ENCODE measurements at regions of chr1 and their contacts with region 1.

Region 1: DNA sequence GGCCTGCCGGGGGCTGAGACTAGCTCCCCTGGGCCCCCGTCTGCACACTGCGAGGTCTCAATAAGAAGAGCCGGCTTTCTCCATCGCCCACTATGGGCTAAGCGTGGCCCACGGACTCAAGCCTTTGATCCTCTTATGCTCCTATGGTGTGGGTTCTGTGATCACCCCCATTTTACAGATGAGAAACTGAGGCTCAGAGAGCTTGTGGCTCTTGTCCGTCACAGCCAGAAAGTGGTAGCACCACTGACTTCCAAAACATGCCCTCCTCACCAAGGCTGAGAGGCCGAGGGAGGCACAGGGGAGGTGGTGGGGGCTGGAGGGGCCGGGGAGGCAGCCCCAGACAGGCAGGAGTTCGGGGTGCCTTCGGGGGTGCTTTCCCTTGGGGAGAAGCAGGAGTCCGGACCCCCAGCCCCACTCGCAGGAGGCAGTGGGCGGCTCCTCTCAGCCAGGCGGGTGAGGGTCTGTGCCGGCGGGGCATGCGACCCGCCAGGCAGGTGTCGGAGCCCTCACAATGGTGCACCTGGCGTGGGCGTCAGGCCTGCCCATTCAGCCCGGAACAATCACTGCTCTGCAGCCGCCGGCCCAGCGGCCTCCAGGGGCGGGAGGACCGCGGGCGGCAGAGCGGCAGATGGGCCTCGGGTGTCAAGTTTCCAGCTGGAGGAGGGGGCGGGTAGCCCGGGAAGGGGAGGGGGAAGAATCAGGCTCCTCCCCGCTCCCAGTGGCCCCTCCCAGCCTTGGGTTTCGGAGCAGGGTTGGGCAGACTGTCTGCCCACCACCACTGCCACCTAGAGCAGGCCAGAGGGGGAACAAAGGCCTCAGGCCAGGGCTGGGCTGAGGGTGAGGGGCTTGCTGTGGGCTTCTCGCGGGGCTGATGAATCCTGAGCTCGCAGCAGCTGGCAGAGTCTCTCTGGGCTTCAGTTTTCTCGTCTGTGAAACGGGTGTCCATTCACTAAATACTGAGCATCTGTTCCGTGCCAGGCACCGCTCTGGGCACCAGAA is 39.3 kb upstream of the CASZ1 start:
- DNase-seq: peak; percentile 87 to 97
- H3K4me3 ChIP-seq: peak overlapping the region in 2 of 4 experiments; percentile 12 to 50; a peak in 4 of 8 replicates
- H3K27ac ChIP-seq: no peak overlapping the region
- H3K4me1 ChIP-seq: peaks cover 0 to 34% (median 21%) of the 10 kb centered on the region in 4 experiments; a peak in 6 of 7 replicates
- H3K27me3 ChIP-seq: peaks cover 0 to 3% (median 1%) of the 10 kb centered on the region in 4 experiments; a peak in 3 of 7 replicates
- CTCF ChIP-seq: peak; percentile 35 to 57 (median 55); a peak in 3 of 4 replicates
- EP300 ChIP-seq: peak; percentile 29 to 87; a peak in 2 of 3 replicates
- POLR2A ChIP-seq: peak in 1 of 2 experiments; percentile 51; a peak in 1 of 3 replicates
- RAD21 ChIP-seq: peak; percentile 62 to 66

Region 2: DNA sequence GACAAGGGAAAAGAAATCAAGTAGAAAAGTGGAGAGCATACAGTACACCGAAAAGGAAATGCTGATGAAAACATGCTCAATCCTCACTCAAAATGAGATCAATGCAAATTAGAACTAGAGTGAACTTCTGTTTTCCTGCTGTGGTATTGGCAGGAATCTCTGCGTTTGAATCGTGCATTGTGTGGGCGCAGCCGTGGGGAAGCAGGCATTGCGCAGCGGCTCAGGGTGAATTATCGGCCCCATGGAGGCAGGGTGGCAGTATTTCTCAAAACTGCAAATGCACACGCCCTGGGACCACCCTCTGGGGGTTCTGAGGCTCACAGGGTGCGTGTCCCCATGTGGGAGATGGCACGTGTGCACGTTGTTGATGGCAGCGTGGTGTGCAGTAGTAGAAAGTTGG is 220.4 kb before region 1 on chr1:
- CTCF ChIA-PET with region 1: no interaction called
- POLR2A ChIA-PET with region 1: no interaction called
- DNase-seq: no peak
- H3K4me3 ChIP-seq: no peak overlapping the region
- H3K27ac ChIP-seq: no peak overlapping the region
- H3K4me1 ChIP-seq: peaks cover 0 to 11% (median 3%) of the 10 kb centered on the region in 4 experiments; a peak in 3 of 7 replicates
- H3K27me3 ChIP-seq: no peaks in the 10 kb centered on the region
- CTCF ChIP-seq: no peak
- EP300 ChIP-seq: no peak
- POLR2A ChIP-seq: no peak
- RAD21 ChIP-seq: no peak

Region 3: GRCh38 chr1:10814954-10815857 is 20.5 kb before region 1 on chr1:
- CTCF ChIA-PET with region 1: interaction called, 15 read pairs
- POLR2A ChIA-PET with region 1: interaction called, 3 read pairs
- DNase-seq: no peak
- H3K4me3 ChIP-seq: no peak overlapping the region; a peak in 2 of 8 replicates
- H3K27ac ChIP-seq: no peak overlapping the region
- H3K4me1 ChIP-seq: peaks cover 0 to 17% (median 11%) of the 10 kb centered on the region in 4 experiments; a peak in 6 of 7 replicates
- H3K27me3 ChIP-seq: no peaks in the 10 kb centered on the region
- CTCF ChIP-seq: peak in 2 of 3 experiments; percentile 0 to 14; a peak in 2 of 4 replicates
- EP300 ChIP-seq: no peak
- POLR2A ChIP-seq: peak in 1 of 2 experiments; percentile 85; a peak in 2 of 3 replicates
- RAD21 ChIP-seq: no peak; a peak in 1 of 4 replicates

Region 4: GRCh38 chr1:10877894-10878293 is 42.2 kb after region 1 on chr1:
- CTCF ChIA-PET with region 1: no interaction called
- POLR2A ChIA-PET with region 1: no interaction called
- DNase-seq: no peak
- H3K4me3 ChIP-seq: no peak overlapping the region
- H3K27ac ChIP-seq: no peak overlapping the region
- H3K4me1 ChIP-seq: no peaks in the 10 kb centered on the region
- H3K27me3 ChIP-seq: no peaks in the 10 kb centered on the region
- CTCF ChIP-seq: no peak
- EP300 ChIP-seq: no peak
- POLR2A ChIP-seq: no peak
- RAD21 ChIP-seq: no peak

Region 5: GRCh38 chr1:10901086-10901890 is 65.6 kb after region 1 on chr1:
- CTCF ChIA-PET with region 1: no interaction called
- POLR2A ChIA-PET with region 1: no interaction called
- DNase-seq: peak in 1 of 2 experiments; percentile 59
- H3K4me3 ChIP-seq: no peak overlapping the region
- H3K27ac ChIP-seq: no peak overlapping the region
- H3K4me1 ChIP-seq: peaks cover 0 to 35% (median 22%) of the 10 kb centered on the region in 4 experiments; a peak in 6 of 7 replicates
- H3K27me3 ChIP-seq: no peaks in the 10 kb centered on the region
- CTCF ChIP-seq: no peak
- EP300 ChIP-seq: no peak
- POLR2A ChIP-seq: no peak
- RAD21 ChIP-seq: no peak